Activated B cell treated with CpG ODN at 0.5 μM for 24 hours (primary cell): ENCODE measurements at regions of chr9 and their contacts with region 1.

Region 1: DNA sequence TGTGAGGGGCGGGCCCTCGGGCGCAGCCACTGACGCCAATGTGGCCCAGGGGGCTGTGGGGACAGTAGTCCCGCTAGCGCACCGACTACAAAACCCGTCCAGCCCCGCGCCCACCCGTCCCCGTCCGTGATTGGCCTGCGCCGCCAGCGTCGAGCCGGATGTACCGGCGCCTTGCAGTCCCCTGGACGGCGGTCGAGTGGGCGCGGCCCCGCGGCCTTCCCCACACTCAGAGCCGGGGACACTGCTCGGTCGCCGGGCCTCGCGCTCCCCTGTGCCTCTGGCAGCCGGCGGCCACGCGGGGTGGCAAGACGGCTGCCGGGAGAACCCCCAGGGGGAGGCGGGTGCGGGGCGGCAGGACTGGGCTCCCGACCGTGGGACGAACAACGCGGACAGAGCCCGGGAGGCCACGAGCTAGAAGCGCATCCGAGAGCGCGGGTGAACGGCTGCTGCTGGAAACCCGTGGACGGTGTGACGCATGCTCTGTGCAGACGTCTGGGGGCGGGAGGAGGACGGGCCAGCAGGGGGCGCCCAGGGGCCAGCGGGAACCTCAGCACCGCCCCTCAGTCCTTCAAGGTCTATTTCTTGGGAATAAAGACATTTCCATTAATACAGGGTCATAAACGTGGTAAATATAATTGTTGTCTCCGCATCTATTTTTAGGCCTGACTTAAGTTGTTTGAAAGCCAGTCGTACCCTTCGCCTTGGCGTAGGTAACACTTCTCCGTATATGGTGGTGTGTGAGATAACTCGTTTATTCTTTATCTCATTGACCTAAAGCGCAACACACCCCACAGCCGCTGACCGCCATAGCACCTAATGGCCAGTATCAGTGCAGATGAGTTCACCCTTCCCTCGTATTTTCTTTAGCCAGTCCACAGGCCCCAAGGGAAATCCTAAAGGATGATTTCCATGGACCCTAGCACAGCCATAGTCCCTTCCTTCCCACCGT is 629 bp upstream of the BICD2 start:
- DNase-seq: peak; percentile 97
- ATAC-seq: peak; percentile 91
- H3K4me3 Mint-ChIP-seq: peak overlapping the region; percentile 90
- H3K27ac Mint-ChIP-seq: peak overlapping the region; percentile 95
- H3K4me1 Mint-ChIP-seq: peaks cover 63% of the 10 kb centered on the region
- H3K27me3 Mint-ChIP-seq: no peaks in the 10 kb centered on the region
- CTCF ChIP-seq: peak; percentile 71

Region 2: DNA sequence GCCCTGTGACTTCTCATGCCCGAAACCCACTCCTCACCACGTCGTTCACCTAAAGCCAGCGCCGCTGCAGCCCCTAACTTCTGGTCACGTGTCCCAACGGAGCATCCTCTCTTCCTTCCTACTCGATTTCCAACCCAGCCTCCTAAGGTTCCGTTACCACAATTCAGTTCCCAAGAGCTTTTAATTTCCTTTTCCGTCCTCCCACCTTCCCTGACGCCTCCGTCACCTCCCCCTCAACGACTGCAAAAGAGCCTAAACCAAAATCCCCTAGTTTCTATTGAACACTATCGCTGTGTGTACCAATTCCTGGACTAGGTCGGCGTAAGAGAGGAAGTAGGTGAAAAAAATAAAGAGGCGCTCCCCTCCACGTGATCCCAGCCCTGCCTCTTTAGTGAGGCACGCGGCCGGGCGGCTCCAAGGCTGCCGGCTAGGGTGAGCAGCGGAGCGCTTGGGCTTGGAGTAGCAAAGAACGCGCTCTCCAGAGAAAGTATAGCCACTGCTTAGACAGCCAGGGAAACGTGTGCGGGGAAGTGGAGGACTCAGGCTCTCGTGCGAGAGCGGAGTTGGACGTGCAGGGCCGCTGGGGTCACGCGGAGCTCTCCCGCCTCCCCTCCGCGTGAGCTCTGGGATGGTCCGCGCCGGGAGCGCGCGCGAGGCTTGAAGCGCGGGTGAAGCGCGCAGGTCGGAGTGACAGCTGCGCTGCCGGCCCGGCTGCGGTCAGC is 439.8 kb before region 1 on chr9 and contains the starts of genes CENPP and NOL8:
- CTCF ChIA-PET with region 1: no interaction called
- POLR2A ChIA-PET with region 1: interaction called, 4 read pairs
- intact Hi-C with region 1: loop called (anchors 1 kb)
- DNase-seq: peak; percentile 74
- ATAC-seq: peak; percentile 91
- H3K4me3 Mint-ChIP-seq: peak within 1 kb of the TSS; percentile 98
- H3K27ac Mint-ChIP-seq: peak within 1 kb of the TSS; percentile 98
- H3K4me1 Mint-ChIP-seq: peaks cover 27% of the 10 kb centered on the region
- H3K27me3 Mint-ChIP-seq: no peaks in the 10 kb centered on the region
- CTCF ChIP-seq: no peak
- total RNA-seq, gene CENPP: 5.7 and 5.9 TPM in 2 replicates
- total RNA-seq, gene NOL8: 67.0 and 78.4 TPM in 2 replicates

Region 3: GRCh38 chr9:92728831-92729734 is 36.2 kb before region 1 on chr9:
- CTCF ChIA-PET with region 1: interaction called, 5 read pairs
- POLR2A ChIA-PET with region 1: interaction called, 6 read pairs
- intact Hi-C with region 1: loop called (anchors 1 kb)
- DNase-seq: peak; percentile 40
- ATAC-seq: peak; percentile 92
- H3K4me3 Mint-ChIP-seq: peak overlapping the region; percentile 75
- H3K27ac Mint-ChIP-seq: peak overlapping the region; percentile 80
- H3K4me1 Mint-ChIP-seq: peaks cover 86% of the 10 kb centered on the region
- H3K27me3 Mint-ChIP-seq: no peaks in the 10 kb centered on the region
- CTCF ChIP-seq: no peak

Region 4: GRCh38 chr9:92820964-92821363 is 55.7 kb after region 1 on chr9:
- CTCF ChIA-PET with region 1: no interaction called
- POLR2A ChIA-PET with region 1: no interaction called
- intact Hi-C with region 1: no loop called
- DNase-seq: no peak
- ATAC-seq: no peak
- H3K4me3 Mint-ChIP-seq: no peak overlapping the region
- H3K27ac Mint-ChIP-seq: no peak overlapping the region
- H3K4me1 Mint-ChIP-seq: no peaks in the 10 kb centered on the region
- H3K27me3 Mint-ChIP-seq: peaks cover 24% of the 10 kb centered on the region
- CTCF ChIP-seq: no peak

Region 5: DNA sequence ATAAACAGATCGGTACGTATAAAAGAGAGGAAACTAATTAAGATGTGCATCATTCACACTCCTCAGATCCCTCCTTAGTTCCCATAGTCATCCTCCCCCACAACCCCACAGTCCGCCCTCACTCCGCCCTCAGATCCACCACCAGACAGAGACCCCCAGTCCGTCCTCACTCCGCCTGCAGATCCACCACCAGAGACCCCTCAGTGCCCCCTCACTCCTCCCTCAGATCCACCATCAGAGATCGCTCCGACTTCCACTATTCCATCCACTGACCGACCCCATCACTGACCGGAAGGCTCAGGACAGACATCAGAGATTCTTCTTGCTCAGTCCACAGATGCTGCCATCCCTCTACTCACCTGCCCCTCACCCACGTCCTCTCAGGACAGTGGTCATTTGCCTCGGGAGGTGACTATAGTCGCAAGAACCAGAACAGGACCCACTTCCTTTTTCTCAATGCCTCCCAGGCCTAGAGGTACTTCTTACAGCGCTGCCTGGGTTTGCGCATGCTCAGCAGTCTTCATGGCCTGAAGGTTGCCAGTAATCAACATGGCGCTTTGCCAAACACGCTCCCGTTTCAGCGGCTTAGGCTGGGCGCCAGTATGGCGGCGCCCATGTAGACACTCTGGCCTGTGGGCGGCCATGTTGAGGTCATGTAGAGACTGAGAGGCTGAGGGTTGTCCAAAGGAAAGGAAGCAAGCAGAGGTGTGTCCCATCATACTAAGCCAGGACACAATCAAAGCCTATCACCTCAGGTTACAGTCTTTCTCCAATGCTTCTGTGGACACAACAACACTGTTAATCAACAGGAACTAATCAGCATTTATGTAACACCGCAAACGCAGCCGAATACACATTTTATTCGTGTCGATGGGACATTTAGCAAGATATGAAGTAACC is 112.5 kb after region 1 on chr9 and contains the start of gene ZNF484:
- CTCF ChIA-PET with region 1: no interaction called
- POLR2A ChIA-PET with region 1: no interaction called
- intact Hi-C with region 1: loop called (anchors 1 kb)
- DNase-seq: peak; percentile 83
- ATAC-seq: peak; percentile 96
- H3K4me3 Mint-ChIP-seq: peak within 1 kb of the TSS; percentile 99
- H3K27ac Mint-ChIP-seq: peak within 1 kb of the TSS; percentile 99
- H3K4me1 Mint-ChIP-seq: peaks cover 28% of the 10 kb centered on the region
- H3K27me3 Mint-ChIP-seq: no peaks in the 10 kb centered on the region
- CTCF ChIP-seq: no peak
- total RNA-seq, gene ZNF484: 12.2 and 14.0 TPM in 2 replicates

Region 6: GRCh38 chr9:93453047-93453914 is 688.0 kb after region 1 on chr9 and contains the start of gene FAM120AOS:
- CTCF ChIA-PET with region 1: no interaction called
- POLR2A ChIA-PET with region 1: no interaction called
- intact Hi-C with region 1: loop called (anchors 5 kb)
- DNase-seq: peak; percentile 68
- ATAC-seq: peak; percentile 74
- H3K4me3 Mint-ChIP-seq: peak within 1 kb of the TSS; percentile 96
- H3K27ac Mint-ChIP-seq: peak within 1 kb of the TSS; percentile 97
- H3K4me1 Mint-ChIP-seq: peaks cover 56% of the 10 kb centered on the region
- H3K27me3 Mint-ChIP-seq: no peaks in the 10 kb centered on the region
- CTCF ChIP-seq: no peak
- total RNA-seq, gene FAM120AOS: 35.8 and 39.0 TPM in 2 replicates